Activated CD4-positive, alpha-beta T cell treated with anti-CD3 and anti-CD28 coated beads for 36 hours (primary cell): ENCODE measurements at regions of chr9 and their contacts with region 1.

Region 1: DNA sequence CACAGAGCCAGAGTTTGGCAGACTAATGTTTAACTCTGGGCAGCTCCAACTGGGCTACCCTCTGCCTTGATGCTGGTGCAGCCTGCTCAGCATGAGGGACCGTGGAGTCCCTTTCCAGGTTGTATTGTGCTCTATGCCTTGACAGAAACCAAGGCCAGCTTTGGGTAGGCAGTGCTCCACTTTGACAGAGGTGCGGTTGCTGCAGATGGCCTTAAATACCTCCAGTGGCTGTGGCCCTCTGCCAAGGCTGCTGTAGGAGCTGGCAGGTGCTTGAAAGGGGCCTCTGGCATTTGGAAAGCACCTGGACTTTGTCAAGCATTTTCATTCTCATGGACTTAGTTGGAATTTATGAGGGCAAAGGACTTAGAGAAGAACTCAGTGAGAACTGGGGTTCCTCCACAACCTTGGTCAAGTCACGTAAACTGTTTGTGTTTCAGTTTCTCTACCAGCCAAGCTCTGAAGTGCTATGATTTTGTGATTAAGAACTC is 249.7 kb upstream of the ZNF462 start:
- DNase-seq: no peak
- ATAC-seq: no peak
- H3K4me3 Mint-ChIP-seq: no peak overlapping the region
- H3K27ac Mint-ChIP-seq: no peak overlapping the region
- H3K4me1 Mint-ChIP-seq: no peaks in the 10 kb centered on the region
- H3K27me3 Mint-ChIP-seq: no peaks in the 10 kb centered on the region

Region 2: DNA sequence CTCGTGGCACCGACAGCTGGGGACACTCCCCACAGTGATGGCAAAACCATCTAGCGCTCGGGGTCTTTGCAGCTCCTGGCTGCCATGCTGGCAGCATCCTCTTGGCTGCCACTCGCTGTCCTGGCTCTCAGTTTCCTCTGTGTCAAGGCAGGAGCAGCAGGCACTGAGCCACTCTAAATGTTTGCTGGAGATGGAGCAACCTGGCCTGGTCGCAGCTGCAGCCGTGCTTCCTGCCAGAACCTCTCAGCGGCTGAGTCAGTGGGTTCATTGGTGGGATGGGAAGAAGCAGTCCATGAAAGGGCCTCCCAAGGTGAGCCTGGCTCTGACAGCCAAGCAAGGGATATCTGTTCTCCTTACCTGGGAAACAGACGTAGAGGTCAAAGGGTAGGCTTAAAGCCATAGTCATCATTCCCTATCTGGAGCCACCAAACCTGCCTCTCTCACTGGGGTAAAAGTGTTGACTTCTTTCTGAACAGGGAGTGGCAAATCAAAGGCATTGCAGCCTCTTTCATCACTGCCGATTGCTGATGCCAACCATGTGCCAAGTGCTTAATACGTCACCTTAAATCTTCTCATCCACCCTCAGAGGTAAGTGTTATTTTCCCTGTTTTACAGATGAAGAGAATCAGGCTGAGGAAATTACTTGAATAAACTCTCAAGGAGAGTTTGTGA is 55.2 kb before region 1 on chr9:
- CTCF ChIA-PET with region 1: no interaction called
- POLR2A ChIA-PET with region 1: no interaction called
- intact Hi-C with region 1: loop called in 1 of 2 experiments (anchors 10 kb)
- DNase-seq: no peak
- ATAC-seq: no peak
- H3K4me3 Mint-ChIP-seq: no peak overlapping the region
- H3K27ac Mint-ChIP-seq: no peak overlapping the region
- H3K4me1 Mint-ChIP-seq: no peaks in the 10 kb centered on the region
- H3K27me3 Mint-ChIP-seq: no peaks in the 10 kb centered on the region

Region 3: DNA sequence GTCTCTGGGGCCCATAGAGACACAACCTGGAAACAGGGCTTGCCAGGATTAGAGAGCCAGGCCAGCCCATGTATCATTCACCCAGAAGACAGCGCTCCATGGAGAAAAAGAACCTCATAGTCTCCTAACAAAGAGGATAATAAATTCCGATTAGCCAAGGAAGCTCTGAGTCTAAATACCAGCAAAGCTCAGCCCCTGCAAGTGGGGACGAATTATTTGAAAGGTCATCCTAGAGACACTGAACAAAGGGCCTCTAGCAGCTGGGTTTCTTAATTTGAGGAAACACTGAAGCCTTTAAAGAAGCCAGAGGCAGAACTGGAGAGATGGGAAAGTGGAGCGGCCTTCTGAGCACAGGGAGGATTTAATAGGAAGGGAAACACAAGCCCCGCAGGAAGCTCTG is 37.5 kb before region 1 on chr9:
- CTCF ChIA-PET with region 1: no interaction called
- POLR2A ChIA-PET with region 1: no interaction called
- intact Hi-C with region 1: loop called in 1 of 2 experiments (anchors 5 kb)
- DNase-seq: no peak
- ATAC-seq: no peak
- H3K4me3 Mint-ChIP-seq: no peak overlapping the region
- H3K27ac Mint-ChIP-seq: no peak overlapping the region
- H3K4me1 Mint-ChIP-seq: no peaks in the 10 kb centered on the region
- H3K27me3 Mint-ChIP-seq: no peaks in the 10 kb centered on the region